ENCODE measurements at regions of chr7 and their contacts with region 1.

Region 1: DNA sequence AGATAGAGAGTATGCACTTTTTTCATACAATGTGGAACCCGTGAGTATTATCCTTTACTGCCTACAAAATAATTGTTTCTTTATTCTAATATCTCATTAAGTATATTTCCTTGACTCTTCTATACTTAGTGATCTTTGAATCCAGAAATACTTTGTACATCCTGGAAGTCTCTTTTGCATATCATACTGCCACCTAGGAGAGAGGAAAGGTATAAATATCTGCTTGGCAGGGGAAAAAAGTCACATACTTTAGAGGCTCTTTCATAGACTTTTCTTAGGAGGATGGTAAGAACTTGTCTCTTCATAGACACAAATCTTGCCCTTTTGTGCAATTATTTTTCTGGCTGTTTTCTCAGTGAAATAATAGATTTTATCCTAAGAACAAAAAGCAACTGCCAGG is 436.0 kb downstream of the PAXIP1 start:
- DNase-seq: no peak
- H3K4me3 ChIP-seq: no peak overlapping the region
- H3K27ac ChIP-seq: no peak overlapping the region
- H3K4me1 ChIP-seq: no peaks in the 10 kb centered on the region
- H3K27me3 ChIP-seq: no peaks in the 10 kb centered on the region
- CTCF ChIP-seq: no peak

Region 2: GRCh38 chr7:154451480-154452457 is 115.1 kb before region 1 on chr7:
- CTCF ChIA-PET with region 1: no interaction called
- dilution Hi-C with region 1: no loop called
- in situ Hi-C with region 1: loop called in 1 of 2 experiments (anchors 25 kb)
- intact Hi-C with region 1: no loop called
- DNase-seq: no peak
- H3K4me3 ChIP-seq: no peak overlapping the region
- H3K27ac ChIP-seq: no peak overlapping the region
- H3K4me1 ChIP-seq: no peaks in the 10 kb centered on the region
- H3K27me3 ChIP-seq: no peaks in the 10 kb centered on the region
- CTCF ChIP-seq: no peak

Region 3: GRCh38 chr7:154532771-154533170 is 34.1 kb before region 1 on chr7:
- CTCF ChIA-PET with region 1: no interaction called
- dilution Hi-C with region 1: no loop called
- in situ Hi-C with region 1: no loop called
- intact Hi-C with region 1: no loop called
- DNase-seq: no peak
- H3K4me3 ChIP-seq: no peak overlapping the region
- H3K27ac ChIP-seq: no peak overlapping the region
- H3K4me1 ChIP-seq: no peaks in the 10 kb centered on the region
- H3K27me3 ChIP-seq: no peaks in the 10 kb centered on the region
- CTCF ChIP-seq: no peak

Measured in mammary epithelial cell (primary cell).